ENCODE measurements at regions of chr7 and their contacts with region 1.

Region 1: GRCh38 chr7:44257618-44258422 is 57.0 kb downstream of the YKT6 start:
- DNase-seq: peak; percentile 90
- H3K4me3 Mint-ChIP-seq: peak overlapping the region; percentile 52
- H3K27ac Mint-ChIP-seq: peak overlapping the region; percentile 90
- H3K4me1 Mint-ChIP-seq: peaks cover 38% of the 10 kb centered on the region
- H3K27me3 Mint-ChIP-seq: no peaks in the 10 kb centered on the region

Region 2: DNA sequence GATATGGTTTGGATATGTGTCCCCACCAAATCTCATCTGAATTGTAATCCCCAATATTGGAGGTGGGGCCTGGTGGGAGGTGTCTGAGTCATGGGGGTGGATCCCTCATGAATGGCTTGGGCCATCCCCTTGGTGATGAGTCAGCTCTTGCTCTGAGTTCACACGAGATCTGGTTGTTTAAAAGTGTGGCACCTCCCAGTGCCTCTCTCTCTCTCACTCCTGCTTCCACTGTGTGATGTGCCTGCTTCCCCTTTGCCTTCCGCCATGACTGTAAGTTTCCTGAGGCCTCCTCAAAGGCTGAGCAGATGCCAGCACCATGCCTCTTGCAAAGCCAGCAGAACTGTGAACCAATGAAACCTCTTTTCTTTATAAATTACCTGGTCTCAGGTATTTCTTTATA is 63.8 kb before region 1 on chr7:
- CTCF ChIA-PET with region 1: no interaction called
- POLR2A ChIA-PET with region 1: no interaction called
- intact Hi-C with region 1: no loop called
- DNase-seq: peak; percentile 68
- H3K4me3 Mint-ChIP-seq: no peak overlapping the region
- H3K27ac Mint-ChIP-seq: no peak overlapping the region
- H3K4me1 Mint-ChIP-seq: peaks cover 6% of the 10 kb centered on the region
- H3K27me3 Mint-ChIP-seq: peaks cover 9% of the 10 kb centered on the region

Region 3: DNA sequence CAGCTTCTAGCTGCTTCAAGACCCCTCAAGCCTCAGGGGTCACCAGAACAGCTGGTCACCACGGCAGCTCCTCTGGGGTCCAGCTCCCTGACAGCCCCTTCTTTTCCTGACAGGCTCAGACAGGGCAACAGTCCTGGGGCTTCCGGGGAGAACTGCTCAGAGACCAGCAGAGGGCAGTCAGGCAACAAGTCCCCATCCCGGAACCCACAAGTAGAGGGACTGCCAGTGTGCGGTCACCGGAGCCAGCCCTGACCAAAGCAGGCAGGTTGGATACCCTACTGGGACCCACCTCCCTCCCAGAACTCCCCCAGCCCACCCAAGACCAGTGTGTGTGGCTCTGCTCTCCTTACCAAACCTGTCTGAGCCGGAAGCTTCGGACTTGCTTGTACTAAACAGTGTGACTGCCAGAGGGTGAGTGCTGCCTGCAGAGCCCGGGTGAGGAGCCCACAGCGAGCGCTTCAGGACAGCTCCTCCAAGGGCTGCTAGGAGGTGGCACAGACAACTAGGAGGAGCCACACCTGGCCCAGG is 16.8 kb before region 1 on chr7:
- CTCF ChIA-PET with region 1: interaction called, 26 read pairs
- POLR2A ChIA-PET with region 1: no interaction called
- intact Hi-C with region 1: loop called (anchors 2 kb)
- DNase-seq: peak; percentile 77
- H3K4me3 Mint-ChIP-seq: no peak overlapping the region
- H3K27ac Mint-ChIP-seq: no peak overlapping the region
- H3K4me1 Mint-ChIP-seq: no peaks in the 10 kb centered on the region
- H3K27me3 Mint-ChIP-seq: no peaks in the 10 kb centered on the region

Region 4: DNA sequence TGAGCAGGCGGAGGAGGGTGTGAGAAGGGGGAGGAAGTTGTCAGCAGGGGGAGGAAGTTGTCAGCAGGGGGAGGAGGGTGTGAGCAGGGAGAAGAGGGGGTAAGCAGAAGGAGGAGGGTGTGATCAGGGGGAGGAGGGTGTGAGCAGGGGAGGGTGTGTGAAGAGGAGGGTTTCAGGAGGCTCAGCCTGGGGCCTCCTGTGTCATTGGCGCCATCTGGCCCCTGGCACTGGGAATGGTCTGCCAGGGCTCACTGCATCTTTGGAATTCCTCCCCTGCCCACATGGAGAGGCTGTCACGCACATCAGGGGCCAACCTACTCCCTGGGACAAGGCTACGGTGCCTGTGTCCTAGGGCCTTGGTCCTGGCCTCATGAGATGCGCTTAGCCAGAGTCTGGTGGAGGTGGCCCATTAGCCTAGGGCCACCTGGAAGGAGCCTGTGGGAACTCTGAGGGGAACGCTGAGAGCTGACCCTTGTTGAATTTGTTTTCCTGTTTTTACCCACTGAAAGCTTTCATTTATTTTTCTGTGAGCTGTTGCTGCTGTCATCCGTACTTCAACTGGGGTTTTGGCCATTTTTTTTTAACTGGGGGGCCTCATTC is 49.6 kb after region 1 on chr7:
- CTCF ChIA-PET with region 1: no interaction called
- POLR2A ChIA-PET with region 1: no interaction called
- intact Hi-C with region 1: loop called (anchors 5 kb)
- DNase-seq: peak; percentile 46
- H3K4me3 Mint-ChIP-seq: no peak overlapping the region
- H3K27ac Mint-ChIP-seq: no peak overlapping the region
- H3K4me1 Mint-ChIP-seq: peaks cover 2% of the 10 kb centered on the region
- H3K27me3 Mint-ChIP-seq: peaks cover 10% of the 10 kb centered on the region

Region 5: DNA sequence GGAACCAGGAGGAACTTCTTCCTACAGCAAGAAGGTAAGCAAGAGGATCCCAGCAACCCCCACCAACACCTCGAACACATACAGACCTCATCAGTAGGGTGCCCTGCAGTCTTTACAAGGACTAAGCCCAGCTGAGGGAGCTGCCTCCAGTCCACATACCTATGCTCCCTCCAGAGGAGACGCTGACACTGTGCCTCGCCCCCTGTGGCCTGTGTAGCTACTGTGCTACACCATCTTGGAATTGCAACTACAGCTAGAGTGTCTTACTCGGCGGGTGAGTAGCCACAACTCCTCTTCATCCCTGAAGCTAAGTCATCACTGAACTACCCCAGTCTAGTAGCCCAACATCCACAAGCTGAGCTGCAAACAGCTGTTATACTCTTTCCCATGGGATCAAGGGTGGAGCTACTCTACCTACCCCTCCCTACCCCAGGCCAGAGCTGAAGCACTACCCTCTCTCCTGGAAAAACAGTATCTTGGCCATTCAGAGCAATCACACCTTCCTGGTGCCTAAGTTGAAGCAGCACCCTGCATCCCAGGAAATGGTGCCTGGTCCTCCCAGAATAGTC is 109.7 kb after region 1 on chr7:
- CTCF ChIA-PET with region 1: no interaction called
- POLR2A ChIA-PET with region 1: no interaction called
- intact Hi-C with region 1: no loop called
- DNase-seq: no peak
- H3K4me3 Mint-ChIP-seq: no peak overlapping the region
- H3K27ac Mint-ChIP-seq: no peak overlapping the region
- H3K4me1 Mint-ChIP-seq: peaks cover 1% of the 10 kb centered on the region
- H3K27me3 Mint-ChIP-seq: peaks cover 15% of the 10 kb centered on the region